ENCODE measurements at regions of chr1 and their contacts with region 1.

Region 1: GRCh38 chr1:201999625-202000238 is 10.7 kb upstream of the ELF3 start:
- DNase-seq: no peak
- ATAC-seq: peak; percentile 92
- H3K4me3 ChIP-seq: no peak overlapping the region
- H3K27ac ChIP-seq: no peak overlapping the region
- H3K4me1 ChIP-seq: no peaks in the 10 kb centered on the region
- H3K27me3 ChIP-seq: no peaks in the 10 kb centered on the region
- CTCF ChIP-seq: peak; percentile 67 to 73 (median 72)
- EP300 ChIP-seq: no peak
- POLR2A ChIP-seq: 0 out of 2 replicates have a peak, but pooled peaks have one; percentile 25
- RAD21 ChIP-seq: peak; percentile 42; the same call in 1 of the 2 replicates

Region 2: GRCh38 chr1:201578008-201578888 is 421.5 kb before region 1 on chr1:
- CTCF ChIA-PET with region 1: no interaction called
- POLR2A ChIA-PET with region 1: no interaction called
- RAD21 ChIA-PET with region 1: no interaction called
- SMC1A ChIA-PET with region 1: no interaction called
- in situ Hi-C with region 1: no loop called
- intact Hi-C with region 1: no loop called
- DNase-seq: no peak
- ATAC-seq: no peak
- H3K4me3 ChIP-seq: no peak overlapping the region
- H3K27ac ChIP-seq: no peak overlapping the region
- H3K4me1 ChIP-seq: no peaks in the 10 kb centered on the region
- H3K27me3 ChIP-seq: peaks cover 2 to 3% of the 10 kb centered on the region in 2 experiments; a peak in 1 of 4 replicates
- CTCF ChIP-seq: no peak
- EP300 ChIP-seq: no peak
- POLR2A ChIP-seq: no peak
- RAD21 ChIP-seq: no peak

Region 3: GRCh38 chr1:201982623-201983379 is 16.9 kb before region 1 on chr1 and contains the start of gene RNPEP:
- CTCF ChIA-PET with region 1: interaction called, 21 read pairs
- POLR2A ChIA-PET with region 1: interaction called, 3 read pairs
- RAD21 ChIA-PET with region 1: interaction called, 5 read pairs
- SMC1A ChIA-PET with region 1: interaction called, 4 read pairs
- in situ Hi-C with region 1: no loop called
- intact Hi-C with region 1: no loop called
- DNase-seq: no peak
- ATAC-seq: peak; percentile 88
- H3K4me3 ChIP-seq: peak within 1 kb of the TSS; percentile 82
- H3K27ac ChIP-seq: peak within 1 kb of the TSS; percentile 78
- H3K4me1 ChIP-seq: peaks cover 3% of the 10 kb centered on the region
- H3K27me3 ChIP-seq: 0 out of 4 replicates have a peak, but pooled peaks cover 0 to 2% of the 10 kb centered on the region in 2 experiments
- CTCF ChIP-seq: peak in 2 of 3 experiments; percentile 5 to 13; a peak in 2 of 6 replicates
- EP300 ChIP-seq: no peak
- POLR2A ChIP-seq: peak; percentile 80
- RAD21 ChIP-seq: no peak
- polyA plus RNA-seq, gene RNPEP: 18.3 to 21.6 TPM

Region 4: GRCh38 chr1:201989354-201990128 is 10.2 kb before region 1 on chr1:
- CTCF ChIA-PET with region 1: interaction called, 21 read pairs
- POLR2A ChIA-PET with region 1: no interaction called
- RAD21 ChIA-PET with region 1: interaction called, 5 read pairs
- SMC1A ChIA-PET with region 1: interaction called, 4 read pairs
- in situ Hi-C with region 1: no loop called
- intact Hi-C with region 1: no loop called
- DNase-seq: no peak
- ATAC-seq: no peak
- H3K4me3 ChIP-seq: no peak overlapping the region
- H3K27ac ChIP-seq: no peak overlapping the region
- H3K4me1 ChIP-seq: no peaks in the 10 kb centered on the region
- H3K27me3 ChIP-seq: no peaks in the 10 kb centered on the region
- CTCF ChIP-seq: no peak
- EP300 ChIP-seq: no peak
- POLR2A ChIP-seq: no peak
- RAD21 ChIP-seq: no peak

Region 5: GRCh38 chr1:202078241-202078640 is 78.5 kb after region 1 on chr1:
- CTCF ChIA-PET with region 1: no interaction called
- POLR2A ChIA-PET with region 1: no interaction called
- RAD21 ChIA-PET with region 1: no interaction called
- SMC1A ChIA-PET with region 1: no interaction called
- in situ Hi-C with region 1: no loop called
- intact Hi-C with region 1: no loop called
- DNase-seq: no peak
- ATAC-seq: no peak
- H3K4me3 ChIP-seq: no peak overlapping the region
- H3K27ac ChIP-seq: no peak overlapping the region
- H3K4me1 ChIP-seq: no peaks in the 10 kb centered on the region
- H3K27me3 ChIP-seq: no peaks in the 10 kb centered on the region
- CTCF ChIP-seq: no peak
- EP300 ChIP-seq: no peak
- POLR2A ChIP-seq: no peak
- RAD21 ChIP-seq: no peak

Region 6: GRCh38 chr1:202112839-202113672 is 113.3 kb after region 1 on chr1:
- CTCF ChIA-PET with region 1: interaction called, 119 read pairs
- POLR2A ChIA-PET with region 1: no interaction called
- RAD21 ChIA-PET with region 1: interaction called, 7 read pairs
- SMC1A ChIA-PET with region 1: interaction called, 20 read pairs
- in situ Hi-C with region 1: no loop called
- intact Hi-C with region 1: no loop called
- DNase-seq: no peak
- ATAC-seq: peak; percentile 24
- H3K4me3 ChIP-seq: no peak overlapping the region
- H3K27ac ChIP-seq: no peak overlapping the region
- H3K4me1 ChIP-seq: peaks cover 14% of the 10 kb centered on the region
- H3K27me3 ChIP-seq: no peaks in the 10 kb centered on the region
- CTCF ChIP-seq: no peak
- EP300 ChIP-seq: no peak
- POLR2A ChIP-seq: no peak
- RAD21 ChIP-seq: no peak

Region 7: DNA sequence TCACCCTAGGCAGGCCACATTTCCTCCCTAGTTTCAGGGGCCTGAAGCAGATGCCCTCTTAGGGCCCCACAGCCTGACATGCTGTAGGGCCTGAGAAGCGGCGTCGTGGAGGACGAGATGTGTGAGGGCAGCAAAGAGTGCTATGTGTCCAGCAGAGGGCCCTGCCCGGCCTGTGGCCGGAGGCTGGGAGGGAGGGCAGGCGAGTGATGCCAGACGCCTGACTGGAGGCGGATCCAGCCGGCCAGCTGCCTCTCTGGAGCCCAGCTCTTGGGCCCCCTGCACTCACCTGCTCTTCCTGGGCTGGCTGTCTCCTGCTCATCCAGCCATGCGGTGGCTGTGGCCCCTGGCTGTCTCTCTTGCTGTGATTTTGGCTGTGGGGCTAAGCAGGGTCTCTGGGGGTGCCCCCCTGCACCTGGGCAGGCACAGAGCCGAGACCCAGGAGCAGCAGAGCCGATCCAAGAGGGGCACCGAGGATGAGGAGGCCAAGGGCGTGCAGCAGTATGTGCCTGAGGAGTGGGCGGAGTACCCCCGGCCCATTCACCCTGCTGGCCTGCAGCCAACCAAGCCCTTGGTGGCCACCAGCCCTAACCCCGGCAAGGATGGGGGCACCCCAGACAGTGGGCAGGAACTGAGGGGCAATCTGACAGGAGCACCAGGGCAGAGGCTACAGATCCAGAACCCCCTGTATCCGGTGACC is 123.1 kb after region 1 on chr1 and contains the start of gene GPR37L1:
- CTCF ChIA-PET with region 1: interaction called, 119 read pairs
- POLR2A ChIA-PET with region 1: no interaction called
- RAD21 ChIA-PET with region 1: interaction called, 7 read pairs
- SMC1A ChIA-PET with region 1: interaction called, 20 read pairs
- in situ Hi-C with region 1: no loop called
- intact Hi-C with region 1: loop called (anchors 1 kb)
- DNase-seq: no peak
- ATAC-seq: no peak
- H3K4me3 ChIP-seq: no peak within 1 kb of the TSS
- H3K27ac ChIP-seq: no peak within 1 kb of the TSS
- H3K4me1 ChIP-seq: no peaks in the 10 kb centered on the region
- H3K27me3 ChIP-seq: peaks cover 0 to 2% of the 10 kb centered on the region in 2 experiments
- CTCF ChIP-seq: no peak
- EP300 ChIP-seq: no peak
- POLR2A ChIP-seq: no peak
- RAD21 ChIP-seq: no peak
- polyA plus RNA-seq, gene GPR37L1: under 0.01 to 0.02 TPM

Region 8: GRCh38 chr1:203428981-203429599 is 1429.4 kb after region 1 on chr1:
- CTCF ChIA-PET with region 1: no interaction called
- POLR2A ChIA-PET with region 1: no interaction called
- RAD21 ChIA-PET with region 1: no interaction called
- SMC1A ChIA-PET with region 1: no interaction called
- in situ Hi-C with region 1: no loop called
- intact Hi-C with region 1: no loop called
- DNase-seq: peak; percentile 70
- ATAC-seq: peak; percentile 97
- H3K4me3 ChIP-seq: no peak overlapping the region
- H3K27ac ChIP-seq: peak overlapping the region; percentile 70
- H3K4me1 ChIP-seq: peaks cover 13% of the 10 kb centered on the region
- H3K27me3 ChIP-seq: no peaks in the 10 kb centered on the region
- CTCF ChIP-seq: no peak
- EP300 ChIP-seq: peak in 1 of 2 experiments; percentile 48; a peak in 1 of 4 replicates
- POLR2A ChIP-seq: 0 out of 2 replicates have a peak, but pooled peaks have one; percentile 22
- RAD21 ChIP-seq: no peak